PC-3 (cell line): ENCODE measurements at regions of chr5 and their contacts with region 1.

Region 1: DNA sequence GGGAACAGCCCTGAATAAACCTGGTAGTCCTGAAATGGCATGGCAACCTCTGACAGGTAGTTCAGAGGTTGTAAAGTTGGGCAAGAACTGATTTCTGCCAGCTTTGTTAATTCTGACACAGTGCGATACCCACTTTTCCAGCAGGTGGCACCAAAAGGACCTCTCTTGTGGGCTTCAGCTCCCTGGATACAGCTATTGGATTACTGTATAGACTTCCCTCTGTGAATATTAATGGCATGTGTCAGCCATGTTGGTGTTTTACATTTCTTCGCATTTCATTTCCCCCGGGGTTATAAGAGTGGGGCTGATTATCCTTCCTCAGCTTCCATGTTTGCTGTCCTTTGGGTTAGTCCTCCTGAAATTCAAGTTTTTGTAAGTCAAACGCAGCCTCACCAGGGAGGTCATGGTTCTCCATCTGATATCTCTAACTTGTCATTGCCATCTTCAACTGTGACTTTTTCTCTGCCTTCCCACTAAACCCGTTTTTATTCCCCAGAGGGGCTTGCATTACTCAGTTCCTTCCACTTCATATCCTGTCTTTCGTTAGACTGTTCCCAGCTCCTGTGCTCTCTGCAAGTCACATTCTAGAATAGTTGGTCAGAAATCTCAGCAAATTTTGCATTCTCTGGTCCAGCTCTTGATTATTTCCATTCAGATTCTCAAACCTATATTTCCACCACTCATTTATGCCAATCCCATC is 135.6 kb downstream of the LIFR start:
- DNase-seq: peak; percentile 83
- ATAC-seq: peak; percentile 87
- H3K4me3 ChIP-seq: no peak overlapping the region
- H3K27ac ChIP-seq: no peak overlapping the region
- H3K4me1 ChIP-seq: peaks cover 5% of the 10 kb centered on the region
- H3K27me3 ChIP-seq: peaks cover 3% of the 10 kb centered on the region; the same call in 1 of the 2 replicates
- CTCF ChIP-seq: peak; percentile 92

Region 2: GRCh38 chr5:38099205-38100168 is 321.4 kb before region 1 on chr5:
- CTCF ChIA-PET with region 1: interaction called, 10 read pairs
- POLR2A ChIA-PET with region 1: no interaction called
- intact Hi-C with region 1: no loop called
- DNase-seq: no peak
- ATAC-seq: no peak
- H3K4me3 ChIP-seq: no peak overlapping the region
- H3K27ac ChIP-seq: no peak overlapping the region
- H3K4me1 ChIP-seq: no peaks in the 10 kb centered on the region
- H3K27me3 ChIP-seq: peaks cover 31% of the 10 kb centered on the region
- CTCF ChIP-seq: no peak